Activated T-helper 1 cell treated with anti-CD3 and anti-CD28 coated beads, Interleukin-12 subunit alpha, Interleukin-12 subunit beta, Interleukin-2, Interleukin-4 antibody, amounts not matched to agents 30 ng/mL and 10 ng/mL and 1 ng/mL, durations not matched to agents 14 hours and 24 hours and 36 hours (primary cell): ENCODE measurements at regions of chr12 and their contacts with region 1.

Region 1: GRCh38 chr12:45543906-45544315 is 185.6 kb upstream of the ARID2 start:
- DNase-seq: peak; percentile 45
- H3K4me3 Mint-ChIP-seq: no peak overlapping the region
- H3K27ac Mint-ChIP-seq: no peak overlapping the region
- H3K4me1 Mint-ChIP-seq: no peaks in the 10 kb centered on the region
- H3K27me3 Mint-ChIP-seq: peaks cover 4% of the 10 kb centered on the region

Region 2: GRCh38 chr12:45670346-45671065 is 126.6 kb after region 1 on chr12:
- intact Hi-C with region 1: loop called (anchors 5 kb)
- DNase-seq: peak; percentile 9
- H3K4me3 Mint-ChIP-seq: no peak overlapping the region
- H3K27ac Mint-ChIP-seq: no peak overlapping the region
- H3K4me1 Mint-ChIP-seq: peaks cover 31% of the 10 kb centered on the region
- H3K27me3 Mint-ChIP-seq: no peaks in the 10 kb centered on the region

Region 3: GRCh38 chr12:45745861-45746277 is 202.0 kb after region 1 on chr12:
- intact Hi-C with region 1: loop called (anchors 1 kb)
- DNase-seq: no peak
- H3K4me3 Mint-ChIP-seq: no peak overlapping the region
- H3K27ac Mint-ChIP-seq: no peak overlapping the region
- H3K4me1 Mint-ChIP-seq: peaks cover 43% of the 10 kb centered on the region
- H3K27me3 Mint-ChIP-seq: no peaks in the 10 kb centered on the region

Region 4: DNA sequence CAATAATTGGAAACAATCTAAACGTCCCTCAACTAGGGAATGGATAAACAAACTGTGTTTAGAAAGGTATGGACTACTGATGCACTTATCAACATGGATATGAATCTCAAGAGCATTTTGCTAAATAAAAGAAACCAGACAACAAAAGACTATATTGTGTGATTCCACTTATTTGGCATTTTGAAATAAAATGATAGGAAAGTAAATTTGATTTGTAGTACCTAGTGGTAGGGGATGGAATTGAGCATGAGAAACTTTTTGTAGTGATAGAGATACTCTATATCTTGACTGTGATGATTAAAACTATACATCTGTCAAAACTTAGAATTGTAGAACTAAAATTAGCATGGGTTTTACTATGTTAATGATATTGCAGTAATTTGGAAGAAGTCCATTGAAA is 272.7 kb after region 1 on chr12:
- intact Hi-C with region 1: loop called (anchors 10 kb)
- DNase-seq: no peak
- H3K4me3 Mint-ChIP-seq: no peak overlapping the region
- H3K27ac Mint-ChIP-seq: no peak overlapping the region
- H3K4me1 Mint-ChIP-seq: peaks cover 13% of the 10 kb centered on the region
- H3K27me3 Mint-ChIP-seq: no peaks in the 10 kb centered on the region

Region 5: DNA sequence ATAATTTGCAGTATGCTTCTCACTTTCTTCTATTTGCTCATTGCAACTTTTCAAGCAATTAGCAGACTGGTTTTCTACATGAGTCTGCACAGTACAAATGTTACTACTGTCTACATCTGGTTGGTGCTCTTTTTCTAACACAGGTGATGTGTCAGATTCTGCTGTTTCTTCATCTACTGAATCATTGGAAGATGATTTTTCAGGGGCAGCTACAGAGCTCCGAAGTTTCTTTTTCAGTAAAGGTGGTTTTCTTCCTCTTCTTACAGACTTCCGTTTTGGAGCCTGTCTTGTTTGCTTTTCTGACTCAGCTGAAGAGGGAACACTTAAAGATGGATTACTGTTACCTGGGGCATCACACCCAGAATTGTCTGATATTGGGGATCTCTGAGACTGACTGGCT is 384.4 kb after region 1 on chr12:
- intact Hi-C with region 1: loop called (anchors 10 kb)
- DNase-seq: no peak
- H3K4me3 Mint-ChIP-seq: no peak overlapping the region
- H3K27ac Mint-ChIP-seq: peak overlapping the region; percentile 48
- H3K4me1 Mint-ChIP-seq: peaks cover 10% of the 10 kb centered on the region
- H3K27me3 Mint-ChIP-seq: no peaks in the 10 kb centered on the region

Region 6: DNA sequence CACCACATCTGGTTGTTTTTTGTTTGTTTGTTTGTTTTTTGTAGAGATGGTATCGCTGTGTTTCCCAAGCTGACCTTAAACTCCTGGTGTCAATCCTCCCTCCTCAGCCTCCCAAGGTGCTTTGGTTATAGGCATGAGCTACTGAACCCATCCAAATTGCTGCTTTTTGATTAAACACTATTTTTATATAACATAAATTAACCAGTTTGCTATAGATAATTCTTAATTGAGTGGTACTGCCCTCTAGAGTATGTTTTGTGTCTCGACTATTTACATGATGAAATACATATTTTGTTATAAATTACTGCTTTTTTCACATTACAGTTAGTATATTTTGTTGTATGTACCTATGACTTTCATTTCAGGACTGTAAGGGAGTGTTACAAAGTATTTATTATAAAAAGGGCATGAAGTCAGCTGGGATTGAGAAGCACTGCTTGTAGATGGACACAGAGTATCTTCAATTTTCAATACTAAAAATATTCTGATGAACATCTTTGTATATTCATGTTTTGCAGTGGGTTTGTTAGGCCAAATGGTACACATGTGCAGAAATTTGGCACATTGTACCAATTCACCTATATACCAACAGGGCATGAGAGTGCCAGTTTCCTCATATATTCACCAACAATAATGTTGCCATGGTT is 461.4 kb after region 1 on chr12:
- intact Hi-C with region 1: loop called (anchors 5 kb)
- DNase-seq: no peak
- H3K4me3 Mint-ChIP-seq: no peak overlapping the region
- H3K27ac Mint-ChIP-seq: no peak overlapping the region
- H3K4me1 Mint-ChIP-seq: no peaks in the 10 kb centered on the region
- H3K27me3 Mint-ChIP-seq: peaks cover 10% of the 10 kb centered on the region

Region 7: GRCh38 chr12:46401662-46402061 is 857.8 kb after region 1 on chr12:
- intact Hi-C with region 1: no loop called
- DNase-seq: no peak
- H3K4me3 Mint-ChIP-seq: no peak overlapping the region
- H3K27ac Mint-ChIP-seq: no peak overlapping the region
- H3K4me1 Mint-ChIP-seq: peaks cover 73% of the 10 kb centered on the region
- H3K27me3 Mint-ChIP-seq: no peaks in the 10 kb centered on the region